ENCODE measurements at regions of chr3 and their contacts with region 1.

Region 1: DNA sequence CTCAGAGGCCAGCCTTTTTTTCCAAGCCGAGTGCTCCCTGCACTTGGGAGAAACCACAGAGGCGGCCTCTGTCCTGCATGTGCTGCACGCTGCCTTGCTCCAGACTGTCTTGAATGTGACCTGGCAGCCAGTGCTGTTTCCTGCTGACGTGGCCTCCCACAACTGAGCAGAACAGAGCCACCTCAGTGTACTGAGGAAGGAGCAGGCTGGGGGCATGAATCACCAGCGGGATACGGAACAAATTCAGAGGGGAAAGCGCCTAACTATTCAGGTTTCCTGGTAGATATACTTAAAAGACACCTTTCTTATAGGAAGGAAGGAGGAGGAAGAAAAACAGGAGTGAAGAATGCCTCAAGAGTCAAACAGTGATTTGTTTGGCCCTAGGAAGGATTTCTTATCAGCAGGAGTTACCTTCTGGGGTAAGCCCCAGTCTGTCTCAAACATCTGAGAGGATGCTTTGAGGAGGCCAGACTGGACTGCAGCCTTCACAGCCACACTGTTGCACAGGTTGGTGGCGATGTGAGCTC is 114.0 kb downstream of the FNDC3B start:
- DNase-seq: peak; percentile 93
- ATAC-seq: peak; percentile 98
- H3K4me3 ChIP-seq: peak overlapping the region in 1 of 2 experiments; percentile 7; a peak in 2 of 4 replicates
- H3K27ac ChIP-seq: peak overlapping the region; percentile 47
- H3K4me1 ChIP-seq: peaks cover 52 to 59% of the 10 kb centered on the region in 2 experiments
- H3K27me3 ChIP-seq: no peaks in the 10 kb centered on the region
- CTCF ChIP-seq: no peak
- POLR2A ChIP-seq: no peak
- RAD21 ChIP-seq: peak; percentile 36; the same call in 1 of the 2 replicates

Region 2: DNA sequence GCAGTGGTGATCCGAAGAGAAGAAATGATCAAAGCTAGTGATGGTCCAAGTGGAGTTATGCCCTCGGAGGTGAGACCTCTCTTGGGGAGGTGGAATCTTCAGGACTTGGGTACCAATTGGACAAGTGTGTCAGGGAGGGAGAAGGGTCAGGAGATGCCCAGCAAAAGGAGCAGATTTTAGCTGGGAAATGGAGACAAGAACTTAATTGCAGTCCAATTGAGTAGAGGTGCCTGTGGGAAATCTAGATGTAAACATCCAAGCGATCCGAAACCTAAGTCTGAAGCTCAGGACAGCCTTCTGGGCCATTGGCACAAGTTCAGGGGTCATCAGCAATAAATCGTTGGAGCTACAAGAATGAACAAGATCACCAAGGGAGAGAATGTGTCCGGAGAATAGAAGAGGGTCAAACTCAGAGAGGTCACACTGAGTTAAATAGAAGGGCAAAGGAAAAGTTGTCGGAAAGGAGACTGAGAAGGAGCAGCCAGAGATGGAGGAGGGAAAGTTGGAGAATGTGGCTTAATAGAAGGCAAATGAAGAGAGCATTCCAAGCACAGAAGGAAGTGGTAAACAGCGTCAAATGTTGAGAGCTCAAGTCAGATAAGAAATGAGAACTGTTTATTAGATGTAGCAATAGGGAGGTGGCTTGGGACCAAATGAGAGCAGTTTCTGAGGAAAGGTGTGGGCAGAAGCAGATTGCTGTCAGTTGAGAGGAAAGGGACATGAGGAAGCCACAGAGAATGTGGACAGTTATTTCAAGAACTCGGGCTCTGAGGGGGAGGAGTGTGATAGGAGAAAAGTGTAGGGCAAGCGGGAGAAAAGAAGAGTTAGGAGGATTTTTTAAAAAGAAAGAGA is 178.2 kb before region 1 on chr3:
- CTCF ChIA-PET with region 1: interaction called, 3 read pairs
- POLR2A ChIA-PET with region 1: no interaction called
- RAD21 ChIA-PET with region 1: no interaction called
- intact Hi-C with region 1: loop called (anchors 10 kb)
- DNase-seq: no peak
- ATAC-seq: no peak
- H3K4me3 ChIP-seq: no peak overlapping the region
- H3K27ac ChIP-seq: no peak overlapping the region
- H3K4me1 ChIP-seq: no peaks in the 10 kb centered on the region
- H3K27me3 ChIP-seq: no peaks in the 10 kb centered on the region
- CTCF ChIP-seq: no peak
- POLR2A ChIP-seq: no peak
- RAD21 ChIP-seq: no peak

Region 3: DNA sequence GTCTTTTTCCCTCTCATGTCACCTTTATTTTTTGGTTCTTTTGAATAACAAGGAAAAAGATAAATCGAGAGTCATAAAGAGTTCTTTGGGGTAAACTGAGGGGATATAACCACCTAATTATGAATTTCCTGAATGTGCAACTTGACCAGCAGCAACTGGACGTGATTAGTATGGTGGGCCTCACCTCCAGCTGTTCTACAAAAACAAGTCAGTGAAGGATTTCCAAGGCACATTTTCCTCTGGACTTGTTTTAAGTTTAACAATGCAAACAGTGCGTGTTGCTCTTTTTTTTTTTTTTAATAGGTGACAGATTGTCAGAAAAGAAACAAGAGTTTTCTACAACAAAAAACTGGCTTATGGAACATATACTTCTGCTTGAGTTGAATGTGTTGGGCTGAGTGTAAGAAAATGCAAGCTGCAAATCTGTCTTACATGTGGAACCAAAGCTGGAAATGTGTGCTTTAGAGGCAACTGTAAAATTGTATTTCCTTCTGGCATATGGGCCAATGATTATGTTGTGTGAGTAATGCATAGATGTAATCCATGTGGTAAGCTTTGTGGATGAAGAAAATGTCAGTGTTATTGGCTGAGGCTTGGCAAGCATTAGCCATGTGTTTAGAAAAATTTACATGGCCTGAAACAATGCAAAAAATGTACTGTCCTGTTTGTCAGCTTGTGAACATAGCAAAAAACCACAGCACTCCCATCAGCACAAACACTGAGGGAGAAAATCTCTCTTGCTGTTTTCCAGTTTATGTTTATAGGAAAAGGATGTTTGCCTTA is 158.6 kb before region 1 on chr3:
- CTCF ChIA-PET with region 1: no interaction called
- POLR2A ChIA-PET with region 1: no interaction called
- RAD21 ChIA-PET with region 1: no interaction called
- intact Hi-C with region 1: no loop called
- DNase-seq: no peak
- ATAC-seq: no peak
- H3K4me3 ChIP-seq: no peak overlapping the region
- H3K27ac ChIP-seq: no peak overlapping the region
- H3K4me1 ChIP-seq: no peaks in the 10 kb centered on the region
- H3K27me3 ChIP-seq: no peaks in the 10 kb centered on the region
- CTCF ChIP-seq: no peak
- POLR2A ChIP-seq: no peak
- RAD21 ChIP-seq: no peak

Region 4: DNA sequence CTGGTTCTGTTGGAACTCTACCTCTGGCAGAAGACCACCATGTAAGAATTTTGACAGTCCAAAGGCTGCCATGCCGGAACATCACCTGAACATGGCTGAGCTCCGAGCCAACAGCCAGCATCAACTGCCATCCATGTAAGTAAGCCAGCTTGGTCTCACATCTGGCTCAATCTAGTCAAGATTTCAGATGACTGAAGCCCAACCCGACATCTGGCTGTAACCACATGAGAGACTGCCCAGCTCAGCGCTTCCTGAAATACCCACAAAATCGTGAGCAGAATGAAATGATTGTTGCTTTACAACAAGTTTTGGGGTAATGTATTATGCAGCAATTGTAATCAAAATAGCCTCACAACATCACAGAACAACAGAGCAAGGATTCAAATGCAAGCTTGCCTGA is 261.9 kb after region 1 on chr3:
- CTCF ChIA-PET with region 1: no interaction called
- POLR2A ChIA-PET with region 1: no interaction called
- RAD21 ChIA-PET with region 1: no interaction called
- intact Hi-C with region 1: no loop called
- DNase-seq: no peak
- ATAC-seq: no peak
- H3K4me3 ChIP-seq: no peak overlapping the region
- H3K27ac ChIP-seq: no peak overlapping the region
- H3K4me1 ChIP-seq: no peaks in the 10 kb centered on the region
- H3K27me3 ChIP-seq: no peaks in the 10 kb centered on the region
- CTCF ChIP-seq: no peak
- POLR2A ChIP-seq: no peak
- RAD21 ChIP-seq: no peak